CD4-positive, alpha-beta T cell (primary cell): ENCODE measurements at regions of chr17 and their contacts with region 1.

Region 1: DNA sequence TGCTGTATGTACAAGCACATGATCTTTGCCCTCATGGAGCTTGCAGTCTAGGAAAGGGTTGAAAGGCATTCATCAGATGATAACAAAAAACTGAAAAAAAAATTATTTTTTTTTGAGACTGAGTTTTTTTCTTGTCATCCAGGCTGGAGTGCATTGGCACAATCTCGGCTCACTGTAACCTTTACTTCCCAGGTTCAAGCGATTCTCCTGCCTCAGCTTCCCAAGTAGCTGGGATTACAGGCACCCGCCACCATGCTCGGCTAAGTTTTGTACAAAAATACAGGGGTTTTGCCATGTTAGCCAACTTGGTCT is 38.7 kb upstream of the BCAS3 start:
- DNase-seq: no peak
- ATAC-seq: no peak
- H3K4me3 ChIP-seq: no peak overlapping the region
- H3K4me3 Mint-ChIP-seq: no peak overlapping the region
- H3K27ac ChIP-seq: no peak overlapping the region
- H3K27ac Mint-ChIP-seq: no peak overlapping the region
- H3K4me1 ChIP-seq: no peaks in the 10 kb centered on the region
- H3K4me1 Mint-ChIP-seq: peaks cover 12% of the 10 kb centered on the region
- H3K27me3 ChIP-seq: no peaks in the 10 kb centered on the region
- H3K27me3 Mint-ChIP-seq: no peaks in the 10 kb centered on the region
- CTCF ChIP-seq: no peak

Region 2: DNA sequence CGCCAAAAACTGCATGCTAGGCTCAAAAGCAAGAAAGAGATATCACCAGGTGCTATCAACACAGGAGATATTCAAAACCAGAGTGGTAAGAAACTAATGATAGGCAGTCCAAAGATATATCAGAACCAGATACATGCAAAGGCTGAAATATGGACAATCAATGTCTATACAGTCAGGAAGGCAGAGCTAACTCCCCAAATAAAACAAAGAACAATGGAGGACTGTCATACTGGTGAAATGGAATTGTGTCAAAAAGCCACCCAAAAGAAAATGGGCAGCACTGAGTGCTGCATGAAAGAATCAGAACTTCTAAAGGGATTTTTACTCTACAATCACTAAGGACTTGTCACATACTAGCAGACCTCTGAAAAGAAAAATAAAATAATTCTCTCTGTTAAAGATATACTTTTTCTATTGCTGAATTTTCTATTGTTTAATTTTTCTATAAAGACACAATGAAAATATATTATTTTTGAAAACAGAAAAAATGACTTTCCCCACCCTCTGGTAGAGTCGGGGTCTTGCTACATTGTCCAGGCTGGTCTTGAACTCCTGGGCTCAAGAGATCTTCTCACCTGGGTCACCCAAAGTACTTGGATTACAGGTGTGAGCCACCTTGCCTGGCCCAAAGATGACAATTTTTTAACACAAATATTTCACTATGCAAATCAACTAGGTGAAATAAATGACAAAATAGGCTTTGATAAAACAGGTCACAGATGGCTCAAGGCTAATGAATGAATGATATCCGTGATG is 345.2 kb before region 1 on chr17:
- CTCF ChIA-PET with region 1: no interaction called
- POLR2A ChIA-PET with region 1: no interaction called
- intact Hi-C with region 1: no loop called
- DNase-seq: no peak
- ATAC-seq: no peak
- H3K4me3 ChIP-seq: no peak overlapping the region
- H3K4me3 Mint-ChIP-seq: no peak overlapping the region
- H3K27ac ChIP-seq: no peak overlapping the region
- H3K27ac Mint-ChIP-seq: no peak overlapping the region
- H3K4me1 ChIP-seq: no peaks in the 10 kb centered on the region
- H3K4me1 Mint-ChIP-seq: no peaks in the 10 kb centered on the region
- H3K27me3 ChIP-seq: no peaks in the 10 kb centered on the region
- H3K27me3 Mint-ChIP-seq: no peaks in the 10 kb centered on the region
- CTCF ChIP-seq: no peak

Region 3: DNA sequence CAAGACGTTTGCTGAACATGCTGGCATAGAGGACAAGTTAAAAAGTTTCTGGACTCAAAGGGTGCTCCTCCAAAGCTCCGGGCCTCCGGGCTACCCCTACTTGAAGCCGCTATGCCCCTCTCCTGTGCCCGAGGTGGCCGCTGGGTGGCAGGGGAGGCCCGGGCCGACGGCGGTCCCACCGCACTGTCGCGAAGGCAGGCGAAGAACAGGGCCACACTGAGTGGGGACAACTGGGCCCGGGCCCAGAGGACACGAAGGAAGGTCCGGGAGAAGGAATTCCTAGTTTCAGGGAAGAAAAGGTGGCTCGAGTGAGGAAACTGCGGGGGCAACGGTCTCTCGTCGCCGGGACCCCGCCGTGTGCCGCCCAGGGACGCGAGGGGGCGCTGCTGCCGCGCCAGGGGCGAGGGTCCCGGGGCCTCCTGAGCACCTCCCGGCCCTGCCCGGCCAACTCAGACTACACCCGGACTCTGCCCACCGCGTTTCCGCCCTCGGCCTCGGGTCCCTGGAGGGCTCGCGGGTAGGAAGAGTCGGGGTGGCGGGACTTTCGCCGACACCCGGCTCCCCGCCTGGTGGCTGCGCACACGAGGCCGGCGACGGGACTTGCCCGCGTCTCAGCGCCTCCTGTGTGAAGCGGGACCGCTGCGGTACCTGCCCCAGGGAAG is 217.6 kb before region 1 on chr17:
- CTCF ChIA-PET with region 1: no interaction called
- POLR2A ChIA-PET with region 1: interaction called, 3 read pairs
- intact Hi-C with region 1: loop called (anchors 1 kb)
- DNase-seq: peak; percentile 55 to 85 (median 65)
- ATAC-seq: peak; percentile 95
- H3K4me3 ChIP-seq: peak overlapping the region; percentile 52
- H3K4me3 Mint-ChIP-seq: peak overlapping the region; percentile 79
- H3K27ac ChIP-seq: no peak overlapping the region
- H3K27ac Mint-ChIP-seq: peak overlapping the region; percentile 24
- H3K4me1 ChIP-seq: peaks cover 13% of the 10 kb centered on the region
- H3K4me1 Mint-ChIP-seq: peaks cover 5% of the 10 kb centered on the region
- H3K27me3 ChIP-seq: no peaks in the 10 kb centered on the region
- H3K27me3 Mint-ChIP-seq: no peaks in the 10 kb centered on the region
- CTCF ChIP-seq: peak; percentile 100

Region 4: GRCh38 chr17:60573201-60574051 is 65.5 kb before region 1 on chr17:
- CTCF ChIA-PET with region 1: interaction called, 7 read pairs
- POLR2A ChIA-PET with region 1: no interaction called
- intact Hi-C with region 1: loop called in 1 of 2 experiments (anchors 2 kb)
- DNase-seq: no peak
- ATAC-seq: no peak
- H3K4me3 ChIP-seq: no peak overlapping the region
- H3K4me3 Mint-ChIP-seq: no peak overlapping the region
- H3K27ac ChIP-seq: no peak overlapping the region
- H3K27ac Mint-ChIP-seq: no peak overlapping the region
- H3K4me1 ChIP-seq: peaks cover 2% of the 10 kb centered on the region
- H3K4me1 Mint-ChIP-seq: no peaks in the 10 kb centered on the region
- H3K27me3 ChIP-seq: no peaks in the 10 kb centered on the region
- H3K27me3 Mint-ChIP-seq: peaks cover 11% of the 10 kb centered on the region
- CTCF ChIP-seq: no peak

Region 5: GRCh38 chr17:60599620-60600489 is 39.1 kb before region 1 on chr17 and contains the start of gene PPM1D:
- CTCF ChIA-PET with region 1: interaction called, 5 read pairs
- POLR2A ChIA-PET with region 1: interaction called, 4 read pairs
- intact Hi-C with region 1: loop called in 1 of 2 experiments (anchors 5 kb)
- DNase-seq: peak; percentile 95 to 100 (median 97)
- ATAC-seq: peak; percentile 95
- H3K4me3 ChIP-seq: peak within 1 kb of the TSS; percentile 87
- H3K4me3 Mint-ChIP-seq: peak within 1 kb of the TSS; percentile 98
- H3K27ac ChIP-seq: peak within 1 kb of the TSS; percentile 84 to 87
- H3K27ac Mint-ChIP-seq: peak within 1 kb of the TSS; percentile 94
- H3K4me1 ChIP-seq: peaks cover 23% of the 10 kb centered on the region
- H3K4me1 Mint-ChIP-seq: peaks cover 50% of the 10 kb centered on the region
- H3K27me3 ChIP-seq: no peaks in the 10 kb centered on the region
- H3K27me3 Mint-ChIP-seq: no peaks in the 10 kb centered on the region
- CTCF ChIP-seq: no peak
- total RNA-seq, gene PPM1D: 18.1 to 18.3 TPM